ENCODE measurements at regions of chr9 and their contacts with region 1.

Region 1: DNA sequence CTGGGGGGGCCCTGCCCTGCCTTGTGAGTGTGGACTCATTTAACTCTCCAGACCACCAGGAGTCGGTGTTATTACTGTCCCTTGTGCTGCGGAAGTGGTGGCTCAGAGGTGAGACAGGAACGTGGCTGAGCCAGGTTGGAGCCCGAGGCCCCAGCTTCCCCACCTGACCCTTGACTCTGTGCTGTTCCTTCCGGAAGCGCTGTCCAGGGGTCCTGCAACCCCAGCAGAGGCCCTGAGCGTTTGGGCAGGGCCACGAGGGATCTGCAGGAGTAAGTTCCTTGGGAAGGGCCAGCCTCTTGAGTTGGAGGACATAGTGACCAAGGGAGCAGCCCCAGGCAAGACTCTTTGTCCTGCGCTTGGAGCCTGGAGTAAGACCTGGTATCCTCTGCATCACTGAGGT is 99.6 kb downstream of the RXRA start:
- DNase-seq: no peak
- ATAC-seq: no peak
- H3K4me3 ChIP-seq: no peak overlapping the region
- H3K27ac ChIP-seq: no peak overlapping the region
- H3K4me1 ChIP-seq: no peaks in the 10 kb centered on the region
- H3K27me3 ChIP-seq: no peaks in the 10 kb centered on the region
- CTCF ChIP-seq: no peak
- POLR2A ChIP-seq: no peak
- RAD21 ChIP-seq: no peak

Region 2: GRCh38 chr9:134365791-134366688 is 59.8 kb before region 1 on chr9:
- CTCF ChIA-PET with region 1: no interaction called
- POLR2A ChIA-PET with region 1: no interaction called
- RAD21 ChIA-PET with region 1: no interaction called
- intact Hi-C with region 1: loop called (anchors 2 kb)
- DNase-seq: no peak
- ATAC-seq: peak; percentile 83
- H3K4me3 ChIP-seq: peak overlapping the region in 1 of 2 experiments; percentile 35; a peak in 3 of 4 replicates
- H3K27ac ChIP-seq: peak overlapping the region; percentile 74
- H3K4me1 ChIP-seq: peaks cover 26 to 32% of the 10 kb centered on the region in 2 experiments
- H3K27me3 ChIP-seq: no peaks in the 10 kb centered on the region
- CTCF ChIP-seq: 0 out of 6 replicates have a peak, but pooled peaks of 1 of the 3 experiments have one; percentile 3
- POLR2A ChIP-seq: no peak
- RAD21 ChIP-seq: no peak

Region 3: GRCh38 chr9:134378901-134379338 is 46.9 kb before region 1 on chr9:
- CTCF ChIA-PET with region 1: no interaction called
- POLR2A ChIA-PET with region 1: no interaction called
- RAD21 ChIA-PET with region 1: no interaction called
- intact Hi-C with region 1: no loop called
- DNase-seq: peak; percentile 37
- ATAC-seq: peak; percentile 70
- H3K4me3 ChIP-seq: peak overlapping the region; percentile 16 to 56
- H3K27ac ChIP-seq: peak overlapping the region; percentile 96
- H3K4me1 ChIP-seq: peaks cover 61 to 95% of the 10 kb centered on the region in 2 experiments
- H3K27me3 ChIP-seq: no peaks in the 10 kb centered on the region
- CTCF ChIP-seq: no peak
- POLR2A ChIP-seq: no peak
- RAD21 ChIP-seq: no peak

Region 4: GRCh38 chr9:134536101-134536900 is 110.5 kb after region 1 on chr9:
- CTCF ChIA-PET with region 1: no interaction called
- POLR2A ChIA-PET with region 1: no interaction called
- RAD21 ChIA-PET with region 1: no interaction called
- intact Hi-C with region 1: no loop called
- DNase-seq: no peak
- ATAC-seq: no peak; the same call in 1 of the 2 replicates
- H3K4me3 ChIP-seq: no peak overlapping the region
- H3K27ac ChIP-seq: no peak overlapping the region
- H3K4me1 ChIP-seq: peaks cover 0 to 4% of the 10 kb centered on the region in 2 experiments; a peak in 1 of 4 replicates
- H3K27me3 ChIP-seq: peaks cover 20% of the 10 kb centered on the region
- CTCF ChIP-seq: no peak
- POLR2A ChIP-seq: no peak
- RAD21 ChIP-seq: no peak